GM12878 (cell line): ENCODE measurements at regions of chr1 and their contacts with region 1.

Region 1: DNA sequence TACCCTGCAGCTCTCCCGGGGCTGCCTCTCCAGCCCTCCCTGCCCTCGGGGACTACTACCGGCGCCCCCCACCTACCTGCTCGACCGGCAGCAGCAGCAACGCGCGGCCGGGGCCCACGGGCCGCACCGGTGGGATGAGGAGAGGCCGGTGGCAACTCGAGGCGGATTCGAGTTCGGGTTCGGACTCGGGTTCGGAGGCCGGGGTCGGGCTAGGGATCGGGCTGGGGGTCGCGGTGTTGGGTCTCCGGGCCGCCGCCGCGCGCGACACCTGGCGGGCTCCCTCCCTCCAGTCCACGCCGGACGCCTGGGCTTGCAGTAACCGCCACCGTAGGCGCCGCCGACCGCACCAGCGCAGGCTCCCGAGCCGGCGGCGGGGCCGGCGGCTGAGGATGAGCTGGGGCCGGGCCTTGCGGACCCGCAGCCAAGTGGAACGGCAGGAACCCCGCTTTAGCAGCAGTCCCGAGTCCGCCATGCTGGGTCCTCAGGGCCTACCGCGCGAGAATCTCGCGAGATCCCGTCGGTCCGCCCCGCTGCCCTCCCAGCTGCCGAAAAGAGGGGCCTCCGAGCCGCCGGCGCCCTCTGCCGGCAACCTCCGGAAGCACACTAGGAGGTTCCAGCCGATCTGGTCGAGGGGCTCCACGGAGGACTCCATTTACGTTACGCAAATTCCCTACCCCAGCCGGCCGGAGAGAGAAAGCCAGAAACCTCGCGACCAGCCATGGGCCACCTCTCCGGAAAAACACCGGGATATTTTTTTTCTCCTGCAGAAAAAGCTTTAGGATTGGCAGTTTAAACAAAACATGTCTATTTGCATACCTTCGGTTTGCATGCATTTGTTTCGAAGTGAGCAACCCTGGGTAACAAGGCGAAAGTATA is at the start of gene NOL9:
- DNase-seq: peak; percentile 68
- ATAC-seq: peak; percentile 99
- H3K4me3 ChIP-seq: peak within 1 kb of the TSS; percentile 78
- H3K27ac ChIP-seq: peak within 1 kb of the TSS; percentile 78
- H3K4me1 ChIP-seq: peaks cover 9% of the 10 kb centered on the region
- H3K27me3 ChIP-seq: no peaks in the 10 kb centered on the region
- CTCF ChIP-seq: peak; percentile 87 to 96 (median 90)
- EP300 ChIP-seq: no peak
- POLR2A ChIP-seq: peak; percentile 92
- RAD21 ChIP-seq: peak; percentile 33; the same call in 1 of the 2 replicates
- polyA plus RNA-seq, gene NOL9: 3.9 to 4.3 TPM

Region 2: DNA sequence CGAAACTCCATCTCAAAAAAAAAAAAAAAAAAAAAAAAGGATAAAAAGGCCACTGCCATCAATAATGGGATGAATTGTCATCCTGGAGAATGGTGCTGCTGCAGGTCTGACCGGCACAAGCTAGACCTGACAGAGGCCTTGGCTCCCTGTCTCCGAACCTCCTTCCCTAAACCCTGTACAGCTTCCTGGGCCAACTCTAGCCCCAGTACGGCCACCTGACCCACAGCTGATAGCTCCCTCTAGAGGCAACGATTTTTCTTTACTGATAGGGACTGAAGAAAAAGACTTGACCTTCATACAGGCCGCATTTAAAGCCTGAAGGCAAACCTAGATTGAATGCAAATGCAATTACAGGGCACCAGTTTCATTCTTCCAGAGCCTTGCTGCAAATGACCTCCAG is 30.7 kb before region 1 on chr1:
- CTCF ChIA-PET with region 1: interaction called, 17 read pairs
- POLR2A ChIA-PET with region 1: no interaction called
- RAD21 ChIA-PET with region 1: no interaction called
- SMC1A ChIA-PET with region 1: no interaction called
- in situ Hi-C with region 1: no loop called
- intact Hi-C with region 1: no loop called
- DNase-seq: no peak
- ATAC-seq: peak; percentile 71
- H3K4me3 ChIP-seq: no peak overlapping the region
- H3K27ac ChIP-seq: no peak overlapping the region
- H3K4me1 ChIP-seq: no peaks in the 10 kb centered on the region
- H3K27me3 ChIP-seq: no peaks in the 10 kb centered on the region
- CTCF ChIP-seq: peak; percentile 31 to 47 (median 35); a peak in 4 of 6 replicates
- EP300 ChIP-seq: no peak
- POLR2A ChIP-seq: no peak
- RAD21 ChIP-seq: 0 out of 2 replicates have a peak, but pooled peaks have one; percentile 23

Region 3: GRCh38 chr1:6579374-6580118 is 25.3 kb after region 1 on chr1 and contains the start of gene ZBTB48:
- CTCF ChIA-PET with region 1: interaction called, 29 read pairs
- POLR2A ChIA-PET with region 1: interaction called, 4 read pairs
- RAD21 ChIA-PET with region 1: interaction called, 11 read pairs
- SMC1A ChIA-PET with region 1: interaction called, 7 read pairs
- in situ Hi-C with region 1: no loop called
- intact Hi-C with region 1: no loop called
- DNase-seq: peak; percentile 74
- ATAC-seq: peak; percentile 97
- H3K4me3 ChIP-seq: peak within 1 kb of the TSS; percentile 89
- H3K27ac ChIP-seq: peak within 1 kb of the TSS; percentile 68
- H3K4me1 ChIP-seq: peaks cover 13% of the 10 kb centered on the region
- H3K27me3 ChIP-seq: no peaks in the 10 kb centered on the region
- CTCF ChIP-seq: no peak
- EP300 ChIP-seq: no peak
- POLR2A ChIP-seq: peak; percentile 99
- RAD21 ChIP-seq: no peak
- polyA plus RNA-seq, gene ZBTB48: 1.00 to 3.3 TPM

Region 4: DNA sequence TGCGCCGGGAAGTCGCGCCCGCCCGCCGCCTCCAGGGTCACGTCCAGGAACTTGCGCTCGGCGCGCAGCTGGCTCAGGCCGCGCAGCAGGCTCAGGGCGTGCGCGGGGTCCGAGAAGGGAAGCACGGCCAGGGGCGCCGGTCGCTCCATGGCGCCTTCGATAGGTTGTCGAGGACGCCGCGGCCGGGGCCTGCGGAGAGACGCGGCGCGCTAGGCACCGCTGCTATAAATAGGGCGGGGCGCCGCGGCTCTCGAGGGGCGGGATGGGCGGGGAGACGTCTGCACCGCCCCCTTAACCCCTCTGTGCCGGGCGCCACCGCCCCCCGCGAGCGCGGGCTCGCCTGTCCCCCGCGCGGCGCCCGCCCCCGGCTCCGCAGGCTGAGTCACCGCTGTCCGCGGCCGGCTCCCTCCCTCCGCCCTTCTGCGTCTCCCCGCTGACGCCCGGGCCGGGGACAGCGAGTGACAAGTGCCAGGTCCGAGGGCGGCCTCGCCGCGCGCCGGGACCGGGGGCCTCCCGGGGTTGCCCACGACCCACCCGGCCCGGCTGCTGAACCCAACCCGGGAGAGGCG is 48.5 kb after region 1 on chr1 and contains the start of gene KLHL21:
- CTCF ChIA-PET with region 1: interaction called, 39 read pairs
- POLR2A ChIA-PET with region 1: interaction called, 3 read pairs
- RAD21 ChIA-PET with region 1: interaction called, 3 read pairs
- SMC1A ChIA-PET with region 1: interaction called, 4 read pairs
- in situ Hi-C with region 1: no loop called
- intact Hi-C with region 1: no loop called
- DNase-seq: no peak
- ATAC-seq: peak; percentile 76
- H3K4me3 ChIP-seq: peak within 1 kb of the TSS; percentile 94
- H3K27ac ChIP-seq: peak within 1 kb of the TSS; percentile 79
- H3K4me1 ChIP-seq: peaks cover 13% of the 10 kb centered on the region
- H3K27me3 ChIP-seq: no peaks in the 10 kb centered on the region
- CTCF ChIP-seq: no peak
- EP300 ChIP-seq: no peak
- POLR2A ChIP-seq: peak; percentile 83
- RAD21 ChIP-seq: no peak
- polyA plus RNA-seq, gene KLHL21: 0.76 to 1.2 TPM

Region 5: GRCh38 chr1:6613361-6614018 is 59.2 kb after region 1 on chr1 and contains the start of gene PHF13:
- CTCF ChIA-PET with region 1: interaction called, 4 read pairs
- POLR2A ChIA-PET with region 1: interaction called, 5 read pairs
- RAD21 ChIA-PET with region 1: interaction called, 4 read pairs
- SMC1A ChIA-PET with region 1: interaction called, 3 read pairs
- in situ Hi-C with region 1: no loop called
- intact Hi-C with region 1: loop called (anchors 5 kb)
- DNase-seq: peak; percentile 92
- ATAC-seq: peak; percentile 96
- H3K4me3 ChIP-seq: peak within 1 kb of the TSS; percentile 98
- H3K27ac ChIP-seq: peak within 1 kb of the TSS; percentile 51
- H3K4me1 ChIP-seq: no peaks in the 10 kb centered on the region
- H3K27me3 ChIP-seq: no peaks in the 10 kb centered on the region
- CTCF ChIP-seq: no peak
- EP300 ChIP-seq: no peak; a peak in 1 of 4 replicates
- POLR2A ChIP-seq: peak; percentile 71
- RAD21 ChIP-seq: no peak
- polyA plus RNA-seq, gene PHF13: 0.87 to 1.9 TPM

Region 6: DNA sequence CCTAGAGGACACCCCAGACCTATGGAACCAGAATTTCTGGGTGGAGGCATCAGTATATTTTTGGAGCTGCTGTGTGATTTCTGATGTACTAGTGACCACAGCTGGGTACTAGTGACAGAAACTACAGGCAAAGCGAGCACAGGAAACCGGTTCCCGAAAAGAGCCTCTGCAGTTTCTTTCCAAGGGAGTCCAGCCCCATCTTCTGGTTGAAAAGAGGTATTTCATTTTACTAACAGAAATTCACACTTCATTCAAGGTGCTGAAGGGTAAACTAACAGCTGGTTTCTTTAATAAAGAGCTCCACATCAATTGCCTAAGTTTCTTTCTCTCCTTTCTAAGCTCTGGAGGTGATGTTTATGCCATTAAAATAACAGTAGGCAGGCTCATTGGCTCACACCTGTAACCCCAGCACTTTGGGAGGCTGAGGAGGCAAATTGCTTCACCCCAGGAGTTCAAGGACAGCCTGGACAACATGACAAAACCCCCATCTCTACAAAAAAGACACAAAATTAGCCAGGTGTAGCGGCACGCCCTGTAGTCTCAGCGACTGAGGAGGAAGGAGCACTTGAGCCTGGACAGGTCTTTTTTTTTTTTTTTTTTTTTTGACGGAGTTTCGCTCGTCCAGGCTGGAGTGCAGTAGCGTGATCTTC is 92.4 kb after region 1 on chr1:
- CTCF ChIA-PET with region 1: interaction called, 19 read pairs
- POLR2A ChIA-PET with region 1: no interaction called
- RAD21 ChIA-PET with region 1: no interaction called
- SMC1A ChIA-PET with region 1: no interaction called
- in situ Hi-C with region 1: no loop called
- intact Hi-C with region 1: no loop called
- DNase-seq: no peak
- ATAC-seq: peak; percentile 61
- H3K4me3 ChIP-seq: no peak overlapping the region
- H3K27ac ChIP-seq: no peak overlapping the region
- H3K4me1 ChIP-seq: no peaks in the 10 kb centered on the region
- H3K27me3 ChIP-seq: no peaks in the 10 kb centered on the region
- CTCF ChIP-seq: peak; percentile 50 to 72 (median 54)
- EP300 ChIP-seq: no peak
- POLR2A ChIP-seq: no peak
- RAD21 ChIP-seq: peak; percentile 75